ENCODE measurements at regions of chr19 and their contacts with region 1.

Region 1: DNA sequence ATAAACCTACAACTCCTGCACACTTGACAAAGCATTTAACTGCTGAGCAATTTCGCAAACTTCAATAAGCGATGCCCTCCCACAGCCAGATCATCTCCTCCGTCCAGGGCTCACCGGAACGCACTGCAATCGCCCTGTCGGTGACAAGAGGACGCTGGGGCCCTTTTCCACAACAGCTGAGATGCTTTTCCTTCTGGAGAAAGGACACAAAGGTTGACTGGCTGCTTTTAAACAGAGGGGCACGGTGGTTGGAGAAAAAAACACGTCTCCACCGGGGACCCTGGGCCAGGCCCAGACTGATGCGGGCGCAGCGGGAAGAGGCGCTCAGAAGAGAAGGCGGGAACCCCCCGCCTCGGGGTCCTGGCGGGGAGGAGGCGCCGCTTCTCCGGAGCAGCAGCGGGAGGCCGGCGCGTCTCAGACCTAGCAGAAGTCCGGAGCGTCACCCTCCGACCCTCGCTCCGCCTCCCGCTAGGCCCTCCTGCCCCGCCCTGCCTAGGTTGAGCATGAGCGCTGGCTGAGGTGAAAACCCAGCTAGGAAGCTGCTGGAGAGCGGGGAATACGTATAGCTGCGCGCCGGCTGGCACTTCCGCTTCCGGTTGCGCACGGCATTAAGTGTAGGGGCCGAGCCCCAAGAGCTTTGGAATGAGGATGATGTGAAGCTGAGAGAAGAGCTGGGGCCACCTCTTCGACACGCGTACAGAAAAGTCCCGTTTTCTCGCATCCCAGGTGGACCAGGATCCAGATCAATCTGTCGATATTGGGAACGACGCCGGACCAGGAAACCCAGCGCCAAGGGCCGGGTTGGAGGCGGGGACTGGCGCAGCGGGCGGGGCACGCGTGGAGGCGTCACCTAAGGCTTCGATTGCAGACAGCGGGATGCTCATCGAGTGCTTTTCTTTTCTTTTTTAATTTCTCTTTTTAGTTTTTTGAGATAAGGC is at the start of gene ZNF846:
- DNase-seq: peak; percentile 86 to 97 (median 93)

Region 2: GRCh38 chr19:9621156-9622037 is 147.0 kb before region 1 on chr19 and contains the start of gene ZNF561:
- intact Hi-C with region 1: loop called (anchors 5 kb)
- DNase-seq: peak; percentile 73 to 96 (median 90)

Region 3: GRCh38 chr19:9674663-9675357 is 93.6 kb before region 1 on chr19 and contains the start of gene ZNF562:
- intact Hi-C with region 1: loop called (anchors 10 kb)
- DNase-seq: peak; percentile 81 to 95 (median 90)

Region 4: GRCh38 chr19:9727644-9728043 is 40.8 kb before region 1 on chr19:
- intact Hi-C with region 1: no loop called
- DNase-seq: no peak

Measured in head of caudate nucleus (tissue), 42 donors.